ENCODE measurements at regions of chr5 and their contacts with region 1.

Region 1: GRCh38 chr5:69284203-69284602 is 48.4 kb downstream of the CCDC125 start:
- DNase-seq: no peak
- H3K4me3 ChIP-seq: no peak overlapping the region
- H3K27ac ChIP-seq: no peak overlapping the region
- H3K4me1 ChIP-seq: no peaks in the 10 kb centered on the region
- H3K27me3 ChIP-seq: no peaks in the 10 kb centered on the region
- CTCF ChIP-seq: no peak
- POLR2A ChIP-seq: no peak

Region 2: DNA sequence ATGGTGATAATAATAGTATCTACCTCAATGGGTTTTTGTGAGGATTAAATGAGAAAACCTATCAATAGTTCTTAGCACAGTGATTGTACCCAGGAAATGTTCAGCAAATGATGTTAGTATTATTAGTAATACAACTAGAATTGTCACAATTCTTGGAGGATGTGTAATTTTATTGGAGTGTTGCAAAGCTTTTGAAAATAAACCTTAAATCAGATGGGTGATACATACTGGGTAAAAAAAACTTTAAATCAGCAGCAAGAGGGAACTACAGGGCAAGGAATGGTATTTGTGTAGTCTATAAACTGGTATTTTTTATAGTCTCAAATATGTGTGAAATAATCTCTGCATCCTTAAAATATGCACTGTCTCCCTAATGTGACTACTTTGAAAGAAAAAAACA is 697.0 kb before region 1 on chr5:
- intact Hi-C with region 1: loop called (anchors 5 kb)
- DNase-seq: no peak
- H3K4me3 ChIP-seq: no peak overlapping the region
- H3K27ac ChIP-seq: no peak overlapping the region
- H3K4me1 ChIP-seq: no peaks in the 10 kb centered on the region
- H3K27me3 ChIP-seq: no peaks in the 10 kb centered on the region
- CTCF ChIP-seq: no peak
- POLR2A ChIP-seq: no peak

Region 3: DNA sequence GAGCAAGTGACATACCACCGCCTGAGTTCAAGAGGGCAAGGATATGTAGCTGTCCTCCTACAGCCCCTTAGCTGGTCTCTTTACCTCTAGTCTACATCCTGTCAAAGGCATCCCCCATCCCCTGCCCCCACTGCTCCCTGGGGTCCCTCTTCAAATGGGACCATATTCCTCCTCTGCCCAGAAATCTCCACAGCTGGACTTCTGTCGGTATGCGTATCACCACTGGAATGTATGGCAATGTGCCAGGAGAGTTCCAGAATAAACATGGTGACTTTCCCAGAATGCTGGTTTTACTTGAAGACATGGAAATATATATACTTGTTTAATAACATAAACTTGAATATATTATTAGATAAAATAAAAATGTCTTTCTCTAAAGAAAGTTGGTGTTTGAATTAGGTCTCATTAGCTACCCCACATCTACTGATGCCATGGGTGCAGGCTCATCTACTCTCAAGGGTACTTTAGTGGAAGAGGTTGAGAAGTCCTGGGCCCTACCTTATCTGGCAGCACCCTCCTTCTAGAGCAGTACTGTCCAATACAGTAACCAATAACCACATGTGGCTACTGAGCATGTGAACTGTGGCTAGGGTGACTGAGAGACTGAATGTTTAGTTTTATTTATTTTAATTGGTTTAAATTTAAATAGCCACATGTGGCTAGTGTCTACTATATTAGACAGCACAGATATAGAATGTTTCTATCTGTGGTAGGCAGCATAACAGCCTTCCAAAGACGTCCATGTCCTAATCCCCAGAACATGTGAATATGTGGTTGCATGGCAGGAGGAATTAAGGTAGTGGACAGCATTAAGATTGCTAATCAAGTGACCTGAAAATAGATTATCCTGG is 372.1 kb before region 1 on chr5:
- intact Hi-C with region 1: no loop called
- DNase-seq: no peak
- H3K4me3 ChIP-seq: no peak overlapping the region
- H3K27ac ChIP-seq: no peak overlapping the region
- H3K4me1 ChIP-seq: no peaks in the 10 kb centered on the region
- H3K27me3 ChIP-seq: no peaks in the 10 kb centered on the region
- CTCF ChIP-seq: no peak
- POLR2A ChIP-seq: no peak

Region 4: DNA sequence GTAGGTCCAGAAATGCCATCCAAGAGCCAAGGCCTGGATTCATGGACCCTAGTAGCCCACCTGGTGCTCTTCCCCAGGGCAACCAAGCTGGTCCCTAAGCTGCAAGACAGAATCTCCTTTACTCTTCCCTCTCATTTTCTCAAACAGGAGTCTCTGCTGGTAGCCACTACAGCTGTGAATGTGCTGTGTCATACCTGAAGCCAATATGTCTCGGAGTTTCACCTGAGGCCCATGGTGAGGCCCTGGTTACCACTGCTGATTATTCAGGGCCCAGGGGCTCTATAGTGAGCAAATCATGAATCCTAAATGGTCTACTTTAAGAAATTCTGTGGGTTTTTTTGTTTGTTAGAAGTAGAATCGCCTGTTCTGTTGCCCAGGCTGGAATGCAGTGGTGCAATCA is 33.6 kb before region 1 on chr5:
- intact Hi-C with region 1: no loop called
- DNase-seq: no peak
- H3K4me3 ChIP-seq: no peak overlapping the region
- H3K27ac ChIP-seq: no peak overlapping the region
- H3K4me1 ChIP-seq: no peaks in the 10 kb centered on the region
- H3K27me3 ChIP-seq: no peaks in the 10 kb centered on the region
- CTCF ChIP-seq: no peak
- POLR2A ChIP-seq: no peak

Region 5: DNA sequence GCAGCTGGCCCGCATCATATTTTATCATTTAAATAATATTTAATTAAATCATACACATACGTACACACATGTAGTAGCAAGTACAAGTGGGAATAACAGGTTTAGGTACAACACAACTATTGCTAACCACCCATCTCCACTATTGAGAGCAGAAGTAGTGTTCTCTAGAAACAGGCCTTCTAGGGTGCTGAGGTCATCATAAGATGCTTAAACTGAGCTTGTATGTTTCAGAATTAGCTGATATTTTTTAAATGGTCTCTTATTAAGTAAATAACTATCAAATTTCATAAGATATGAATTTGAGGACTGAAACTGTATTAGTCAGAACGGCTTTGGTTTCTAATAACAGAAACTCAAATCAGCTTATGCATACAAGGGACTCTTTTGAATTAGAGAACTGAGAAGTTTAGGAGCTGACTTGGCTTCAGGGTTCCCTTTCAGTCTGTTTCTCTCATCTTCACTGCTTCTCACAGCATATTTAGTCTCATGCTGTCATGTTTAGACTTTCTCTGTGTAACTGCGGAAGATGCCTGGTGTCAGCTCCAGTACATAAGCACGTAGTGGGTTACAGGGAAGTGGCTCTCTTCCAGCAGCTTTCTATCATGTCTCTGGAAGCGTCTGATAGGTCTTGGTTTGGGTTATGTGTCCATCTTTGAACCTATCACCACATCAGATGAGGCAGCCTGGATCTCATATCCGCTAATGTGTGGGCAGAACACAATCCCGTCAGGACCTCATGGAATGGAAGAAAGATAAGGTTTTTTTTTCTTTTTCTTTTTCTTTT is 183.4 kb after region 1 on chr5:
- intact Hi-C with region 1: no loop called
- DNase-seq: no peak
- H3K4me3 ChIP-seq: no peak overlapping the region
- H3K27ac ChIP-seq: no peak overlapping the region
- H3K4me1 ChIP-seq: no peaks in the 10 kb centered on the region
- H3K27me3 ChIP-seq: no peaks in the 10 kb centered on the region
- CTCF ChIP-seq: no peak
- POLR2A ChIP-seq: no peak

Measured in breast epithelium (tissue), 4 donors.